Thyroid gland (tissue), 4 donors: ENCODE measurements at regions of chr11 and their contacts with region 1.

Region 1: DNA sequence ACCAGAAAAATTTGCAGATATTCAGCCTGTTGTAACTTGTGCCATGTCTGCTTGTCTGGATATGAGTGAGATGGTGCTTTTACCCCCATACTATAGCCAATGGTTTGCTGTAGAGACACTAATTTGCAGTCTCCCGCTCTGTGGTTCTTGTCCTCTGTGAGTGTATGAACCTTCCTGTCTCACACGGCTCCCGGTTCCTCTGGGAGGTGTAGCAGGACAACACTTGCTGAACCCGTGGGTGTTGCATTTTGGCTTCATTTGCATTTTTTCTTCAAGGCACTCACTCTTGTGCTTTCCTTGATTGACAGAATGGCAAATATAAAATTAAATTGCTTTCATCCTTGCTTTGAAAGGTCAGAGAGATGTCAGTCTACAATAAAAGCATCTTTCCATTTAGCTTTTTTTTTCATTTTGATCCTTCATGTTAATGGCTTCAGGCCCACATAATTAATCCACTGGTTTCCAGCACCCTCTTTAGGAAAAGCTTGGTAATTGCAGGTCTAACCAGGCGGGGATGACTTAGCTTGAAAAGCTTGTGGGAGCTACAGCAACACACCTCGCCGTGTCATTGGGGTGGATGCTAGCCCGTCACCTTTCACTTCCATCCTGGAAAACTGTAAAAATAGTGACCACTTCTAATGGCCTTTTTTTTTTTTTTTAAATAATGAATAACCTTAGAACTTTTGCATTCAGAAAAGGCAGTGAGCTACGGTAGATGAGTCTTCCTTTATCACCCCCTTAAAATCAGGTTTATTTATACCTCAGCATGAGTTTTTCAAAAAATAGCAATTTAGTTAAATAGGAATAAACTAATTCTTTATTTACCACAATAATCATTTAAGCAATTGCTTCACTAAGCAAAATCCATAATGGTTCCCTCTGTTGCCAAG is 27.4 kb upstream of the ST14 start:
- DNase-seq: peak; percentile 46 to 48
- H3K4me3 ChIP-seq: no peak overlapping the region
- H3K27ac ChIP-seq: no peak overlapping the region
- H3K4me1 ChIP-seq: peaks cover 0 to 3% of the 10 kb centered on the region in 2 donors
- H3K27me3 ChIP-seq: no peaks in the 10 kb centered on the region
- CTCF ChIP-seq: peak; percentile 46 to 93 (median 80)
- POLR2A ChIP-seq: no peak

Region 2: DNA sequence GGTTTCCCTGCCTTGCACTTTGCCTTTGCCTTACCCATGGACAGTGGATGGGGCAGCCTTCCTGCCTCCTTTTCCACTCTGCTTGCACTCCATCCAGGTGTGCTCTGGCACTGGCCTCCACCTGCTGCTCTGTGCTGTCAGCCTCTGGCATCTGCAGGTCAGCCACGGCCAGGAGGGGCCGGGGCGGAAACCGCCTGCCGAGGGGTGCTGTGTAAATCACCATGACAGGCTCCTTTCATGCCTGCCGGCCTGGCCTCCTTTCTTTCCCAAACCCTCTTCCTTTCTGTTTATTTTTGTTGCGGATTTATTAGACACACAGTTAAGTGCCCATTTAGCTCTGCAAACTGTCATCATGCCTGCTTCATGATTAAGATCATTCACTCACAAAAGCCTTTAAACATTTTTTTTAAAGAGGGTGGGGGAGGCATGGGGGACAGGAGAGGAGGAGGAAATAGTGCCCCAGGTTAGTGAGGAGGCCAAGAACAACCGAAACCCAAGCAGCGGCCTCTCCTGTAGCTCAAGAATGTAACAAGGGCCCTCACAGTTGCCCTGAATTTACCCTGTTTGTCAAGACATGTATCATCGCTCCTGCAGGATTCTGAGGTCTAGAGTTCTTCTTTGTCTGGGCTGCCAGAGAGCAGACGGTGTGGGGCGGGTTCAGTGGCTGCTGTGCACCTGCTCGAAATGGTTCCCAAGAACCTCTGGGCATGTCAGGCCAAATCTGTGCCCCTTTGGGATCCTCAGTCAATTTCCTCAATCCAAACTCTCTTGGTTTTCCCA is 673.3 kb before region 1 on chr11:
- intact Hi-C with region 1: no loop called
- DNase-seq: no peak
- H3K4me3 ChIP-seq: no peak overlapping the region
- H3K27ac ChIP-seq: no peak overlapping the region
- H3K4me1 ChIP-seq: no peaks in the 10 kb centered on the region
- H3K27me3 ChIP-seq: no peaks in the 10 kb centered on the region
- CTCF ChIP-seq: no peak
- POLR2A ChIP-seq: no peak

Region 3: DNA sequence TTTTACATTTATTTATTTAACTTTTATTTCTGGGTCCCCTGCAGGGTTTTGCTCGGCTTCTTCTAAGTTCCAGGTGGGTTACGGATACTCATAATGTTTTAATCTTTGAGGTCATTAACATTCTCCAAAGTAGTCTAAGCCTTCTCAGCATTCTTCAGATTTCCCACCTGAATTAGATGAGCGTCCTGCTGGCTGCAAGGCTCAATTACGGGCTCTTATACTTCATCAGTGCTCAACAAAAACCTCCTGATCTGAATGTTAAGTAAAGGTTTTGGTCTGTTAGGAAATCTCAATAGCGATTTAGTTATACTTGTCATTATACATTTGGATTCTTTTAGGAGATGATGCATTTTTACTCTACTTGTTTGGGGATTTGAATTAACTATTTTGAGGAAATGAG is 209.5 kb before region 1 on chr11:
- intact Hi-C with region 1: loop called (anchors 2 kb)
- DNase-seq: no peak
- H3K4me3 ChIP-seq: no peak overlapping the region
- H3K27ac ChIP-seq: no peak overlapping the region
- H3K4me1 ChIP-seq: no peaks in the 10 kb centered on the region
- H3K27me3 ChIP-seq: no peaks in the 10 kb centered on the region
- CTCF ChIP-seq: no peak
- POLR2A ChIP-seq: no peak

Region 4: GRCh38 chr11:129992161-129992944 is 139.9 kb before region 1 on chr11:
- intact Hi-C with region 1: loop called (anchors 10 kb)
- DNase-seq: peak; percentile 51 to 53
- H3K4me3 ChIP-seq: no peak overlapping the region
- H3K27ac ChIP-seq: no peak overlapping the region
- H3K4me1 ChIP-seq: peaks cover 0 to 10% of the 10 kb centered on the region in 2 donors
- H3K27me3 ChIP-seq: no peaks in the 10 kb centered on the region
- CTCF ChIP-seq: peak in 3 of 6 experiments; percentile 40 to 55 (median 44)
- POLR2A ChIP-seq: no peak

Region 5: DNA sequence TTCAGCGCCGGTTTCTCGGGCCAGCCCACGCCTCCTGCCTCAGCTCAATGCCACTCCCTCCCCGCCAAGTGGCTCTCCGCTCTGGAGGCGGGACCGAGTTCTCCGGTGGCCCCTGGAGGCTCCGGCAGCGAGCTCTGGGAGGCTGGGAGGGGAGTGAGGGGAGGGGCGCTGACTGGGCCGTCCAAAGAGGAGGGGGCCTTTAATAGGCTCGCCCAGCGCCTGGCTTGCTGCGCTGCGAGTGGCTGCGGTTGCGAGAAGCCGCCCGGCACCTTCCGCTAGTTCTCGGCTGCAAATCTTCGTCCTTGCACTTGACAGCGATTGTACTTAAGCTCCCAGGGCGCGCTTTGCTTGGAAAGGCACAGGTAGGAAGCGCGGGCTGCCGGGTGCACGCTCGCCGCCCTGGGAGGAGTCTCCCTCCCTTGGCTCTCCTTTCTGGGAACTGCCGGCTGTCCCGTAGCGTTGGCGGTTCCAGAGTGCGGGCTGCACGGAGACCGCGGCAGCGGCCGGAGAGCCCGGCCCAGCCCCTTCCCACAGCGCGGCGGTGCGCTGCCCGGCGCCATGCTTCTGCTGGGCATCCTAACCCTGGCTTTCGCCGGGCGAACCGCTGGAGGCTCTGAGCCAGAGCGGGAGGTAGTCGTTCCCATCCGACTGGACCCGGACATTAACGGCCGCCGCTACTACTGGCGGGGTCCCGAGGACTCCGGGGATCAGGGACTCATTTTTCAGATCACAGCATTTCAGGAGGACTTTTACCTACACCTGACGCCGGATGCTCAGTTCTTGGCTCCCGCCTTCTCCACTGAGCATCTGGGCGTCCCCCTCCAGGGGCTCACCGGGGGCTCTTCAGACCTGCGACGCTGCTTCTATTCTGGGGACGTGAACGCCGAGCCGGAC is 316.5 kb after region 1 on chr11 and contains the start of gene ADAMTS15:
- intact Hi-C with region 1: no loop called
- DNase-seq: peak; percentile 96 to 97
- H3K4me3 ChIP-seq: peak within 1 kb of the TSS; percentile 50 to 90 (median 85)
- H3K27ac ChIP-seq: peak within 1 kb of the TSS; percentile 68 to 82 (median 77)
- H3K4me1 ChIP-seq: peaks cover 21 to 25% of the 10 kb centered on the region in 2 donors
- H3K27me3 ChIP-seq: no peaks in the 10 kb centered on the region
- CTCF ChIP-seq: peak in 1 of 6 experiments; percentile 3
- POLR2A ChIP-seq: peak; percentile 14 to 96
- total RNA-seq, gene ADAMTS15: 11.2 to 29.2 (median 23.5) TPM

Region 6: DNA sequence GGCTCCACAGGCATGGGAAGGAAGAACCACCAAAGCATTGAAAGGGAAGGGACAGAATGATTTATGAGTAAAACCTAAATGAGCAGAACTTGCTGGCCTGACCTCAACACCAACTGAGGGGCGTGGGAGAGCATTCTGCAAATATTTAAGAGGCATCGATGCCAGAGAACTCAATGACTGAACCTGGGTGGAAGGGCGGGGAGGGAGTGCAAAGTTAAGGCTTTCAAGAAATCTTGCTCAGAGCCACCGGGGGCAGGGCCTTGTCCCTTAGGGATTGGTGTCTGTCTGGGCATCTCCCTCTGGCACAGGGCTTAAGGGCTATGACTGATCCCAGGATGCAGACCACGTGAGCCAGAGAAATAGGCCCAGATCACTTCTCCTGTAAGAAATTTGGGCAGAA is 453.3 kb after region 1 on chr11:
- intact Hi-C with region 1: no loop called
- DNase-seq: no peak
- H3K4me3 ChIP-seq: no peak overlapping the region
- H3K27ac ChIP-seq: no peak overlapping the region
- H3K4me1 ChIP-seq: peaks cover 0 to 7% of the 10 kb centered on the region in 2 donors
- H3K27me3 ChIP-seq: no peaks in the 10 kb centered on the region
- CTCF ChIP-seq: no peak
- POLR2A ChIP-seq: no peak